ENCODE measurements at regions of chr6 and their contacts with region 1.

Region 1: GRCh38 chr6:82270881-82271645 is 23.5 kb upstream of the IBTK start:
- DNase-seq: peak; percentile 37
- ATAC-seq: no peak
- H3K4me3 ChIP-seq: no peak overlapping the region
- H3K4me3 Mint-ChIP-seq: no peak overlapping the region
- H3K27ac ChIP-seq: no peak overlapping the region
- H3K27ac Mint-ChIP-seq: no peak overlapping the region
- H3K4me1 ChIP-seq: no peaks in the 10 kb centered on the region
- H3K4me1 Mint-ChIP-seq: no peaks in the 10 kb centered on the region
- H3K27me3 ChIP-seq: no peaks in the 10 kb centered on the region
- H3K27me3 Mint-ChIP-seq: peaks cover 9% of the 10 kb centered on the region
- CTCF ChIP-seq: peak; percentile 77

Region 2: GRCh38 chr6:82247634-82248232 is 23.3 kb before region 1 on chr6 and contains the start of gene IBTK:
- CTCF ChIA-PET with region 1: no interaction called
- POLR2A ChIA-PET with region 1: no interaction called
- intact Hi-C with region 1: no loop called
- DNase-seq: peak; percentile 92
- ATAC-seq: peak; percentile 88
- H3K4me3 ChIP-seq: peak within 1 kb of the TSS; percentile 59 to 96 (median 88)
- H3K4me3 Mint-ChIP-seq: peak within 1 kb of the TSS; percentile 99
- H3K27ac ChIP-seq: peak within 1 kb of the TSS; percentile 82 to 83
- H3K27ac Mint-ChIP-seq: peak within 1 kb of the TSS; percentile 95
- H3K4me1 ChIP-seq: peaks cover 15 to 20% of the 10 kb centered on the region in 2 donors
- H3K4me1 Mint-ChIP-seq: peaks cover 34% of the 10 kb centered on the region
- H3K27me3 ChIP-seq: no peaks in the 10 kb centered on the region
- H3K27me3 Mint-ChIP-seq: peaks cover under 1% of the 10 kb centered on the region
- CTCF ChIP-seq: no peak
- total RNA-seq, gene IBTK: 27.7 and 28.3 TPM in 2 replicates

Region 3: GRCh38 chr6:83057705-83058321 is 786.8 kb after region 1 on chr6:
- CTCF ChIA-PET with region 1: interaction called, 23 read pairs
- POLR2A ChIA-PET with region 1: no interaction called
- intact Hi-C with region 1: loop called (anchors 1 kb)
- DNase-seq: peak; percentile 32
- ATAC-seq: peak; percentile 39
- H3K4me3 ChIP-seq: no peak overlapping the region
- H3K4me3 Mint-ChIP-seq: no peak overlapping the region
- H3K27ac ChIP-seq: no peak overlapping the region
- H3K27ac Mint-ChIP-seq: no peak overlapping the region
- H3K4me1 ChIP-seq: peaks cover 3 to 5% of the 10 kb centered on the region in 2 donors
- H3K4me1 Mint-ChIP-seq: peaks cover 12% of the 10 kb centered on the region
- H3K27me3 ChIP-seq: no peaks in the 10 kb centered on the region
- H3K27me3 Mint-ChIP-seq: no peaks in the 10 kb centered on the region
- CTCF ChIP-seq: peak; percentile 49

Region 4: GRCh38 chr6:83215131-83216047 is 944.3 kb after region 1 on chr6:
- CTCF ChIA-PET with region 1: interaction called, 8 read pairs
- POLR2A ChIA-PET with region 1: no interaction called
- intact Hi-C with region 1: loop called (anchors 2 kb)
- DNase-seq: peak; percentile 72
- ATAC-seq: peak; percentile 98
- H3K4me3 ChIP-seq: no peak overlapping the region
- H3K4me3 Mint-ChIP-seq: no peak overlapping the region
- H3K27ac ChIP-seq: no peak overlapping the region
- H3K27ac Mint-ChIP-seq: no peak overlapping the region
- H3K4me1 ChIP-seq: no peaks in the 10 kb centered on the region
- H3K4me1 Mint-ChIP-seq: no peaks in the 10 kb centered on the region
- H3K27me3 ChIP-seq: peaks cover 0 to 15% (median 0%) of the 10 kb centered on the region in 4 experiments
- H3K27me3 Mint-ChIP-seq: peaks cover 17% of the 10 kb centered on the region
- CTCF ChIP-seq: peak; percentile 81

Region 5: GRCh38 chr6:83514866-83515466 is 1243.9 kb after region 1 on chr6:
- CTCF ChIA-PET with region 1: interaction called, 19 read pairs
- POLR2A ChIA-PET with region 1: no interaction called
- intact Hi-C with region 1: no loop called
- DNase-seq: peak; percentile 40
- ATAC-seq: no peak
- H3K4me3 ChIP-seq: no peak overlapping the region
- H3K4me3 Mint-ChIP-seq: no peak overlapping the region
- H3K27ac ChIP-seq: no peak overlapping the region
- H3K27ac Mint-ChIP-seq: no peak overlapping the region
- H3K4me1 ChIP-seq: peaks cover 9 to 11% of the 10 kb centered on the region in 2 donors
- H3K4me1 Mint-ChIP-seq: peaks cover 13% of the 10 kb centered on the region
- H3K27me3 ChIP-seq: peaks cover 0 to 18% (median 9%) of the 10 kb centered on the region in 4 experiments
- H3K27me3 Mint-ChIP-seq: peaks cover 40% of the 10 kb centered on the region
- CTCF ChIP-seq: peak; percentile 91